Esophagus squamous epithelium (tissue), 5 donors: ENCODE measurements at regions of chr19 and their contacts with region 1.

Region 1: DNA sequence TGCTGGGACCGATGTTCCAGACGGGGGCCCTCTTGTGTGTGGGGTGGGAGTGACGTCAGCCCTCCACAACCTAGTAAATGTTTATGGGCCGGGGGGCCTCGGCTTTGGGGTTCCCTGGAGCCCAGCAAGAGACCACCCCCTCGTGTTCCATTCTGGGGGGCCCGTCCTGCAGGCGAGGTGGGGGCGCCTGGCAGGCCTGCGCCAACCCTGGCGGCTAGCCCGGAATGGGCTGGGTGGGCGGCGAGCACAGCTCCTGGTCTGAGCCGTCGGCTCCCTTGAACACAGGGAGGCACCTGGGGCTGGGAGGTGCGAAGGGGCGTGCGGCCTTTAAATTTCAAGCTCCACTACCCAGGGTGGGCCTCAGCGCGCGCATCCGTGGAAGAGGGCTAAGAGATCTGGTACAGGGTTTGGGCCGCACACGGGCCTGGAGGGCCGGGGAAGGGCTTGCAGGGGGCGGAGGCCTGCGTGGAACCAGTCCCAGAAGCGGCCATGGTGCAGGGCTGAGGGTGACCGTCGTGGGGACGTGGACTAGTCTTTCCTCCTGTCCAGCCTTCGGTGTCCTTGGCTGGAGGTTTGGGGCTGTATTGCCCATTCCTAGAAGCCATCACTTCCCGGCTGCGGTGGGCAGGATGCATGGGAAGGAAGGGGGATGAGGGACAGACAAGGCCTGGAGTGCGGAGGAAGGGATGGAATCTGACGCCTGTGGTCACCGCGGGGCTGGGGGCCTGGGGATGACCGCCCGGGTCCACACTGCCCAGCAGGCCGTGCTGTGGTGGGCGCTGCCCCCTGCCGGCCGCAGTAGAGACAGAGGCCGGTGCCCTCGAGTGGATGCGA is 11.4 kb downstream of the NDUFA11 start:
- DNase-seq: no peak
- H3K4me3 ChIP-seq: no peak overlapping the region
- H3K27ac ChIP-seq: no peak overlapping the region
- H3K4me1 ChIP-seq: peaks cover 10 to 64% (median 13%) of the 10 kb centered on the region in 3 donors
- H3K27me3 ChIP-seq: peaks cover 0 to 28% (median 0%) of the 10 kb centered on the region in 4 donors
- CTCF ChIP-seq: peak in 5 of 6 experiments; percentile 47 to 67 (median 58)
- POLR2A ChIP-seq: no peak

Region 2: GRCh38 chr19:5803752-5804515 is 88.2 kb before region 1 on chr19:
- intact Hi-C with region 1: loop called (anchors 2 kb)
- DNase-seq: no peak
- H3K4me3 ChIP-seq: peak overlapping the region in 3 of 4 donors; percentile 43 to 61 (median 45)
- H3K27ac ChIP-seq: peak overlapping the region in 2 of 4 donors; percentile 33 to 68
- H3K4me1 ChIP-seq: peaks cover 9 to 49% (median 21%) of the 10 kb centered on the region in 3 donors
- H3K27me3 ChIP-seq: peaks cover 0 to 71% (median 3%) of the 10 kb centered on the region in 4 donors
- CTCF ChIP-seq: peak; percentile 66 to 98 (median 94)
- POLR2A ChIP-seq: no peak